ENCODE measurements at regions of chr2 and their contacts with region 1.

Region 1: DNA sequence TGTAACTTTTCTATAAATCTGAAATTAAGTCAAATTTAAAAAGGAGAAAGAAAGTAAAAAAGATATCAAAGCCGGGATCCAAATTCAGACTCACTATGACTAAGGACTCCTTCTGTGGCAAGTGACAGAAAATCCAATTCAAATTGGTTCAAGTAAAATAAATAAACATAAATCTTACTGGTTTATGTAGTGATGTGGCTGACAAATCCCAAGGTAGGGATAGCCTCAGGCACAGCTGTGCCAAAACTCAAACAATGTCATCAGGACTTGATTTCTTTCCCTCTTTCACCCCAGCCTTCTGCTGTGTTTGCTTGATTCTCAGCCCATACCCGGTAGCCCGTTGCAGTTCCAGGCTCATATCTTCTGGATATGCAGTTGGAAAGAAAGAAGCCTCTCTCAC is 284.6 kb downstream of the SP3 start:
- DNase-seq: no peak
- ATAC-seq: no peak

Region 2: GRCh38 chr2:173545364-173545763 is 135.2 kb before region 1 on chr2:
- intact Hi-C with region 1: loop called (anchors 10 kb)
- DNase-seq: no peak
- ATAC-seq: peak; percentile 60

Region 3: GRCh38 chr2:173720306-173720705 is 39.7 kb after region 1 on chr2:
- intact Hi-C with region 1: no loop called
- DNase-seq: no peak
- ATAC-seq: peak; percentile 61

Measured in left ventricle myocardium superior (tissue), 1 donor.